ENCODE measurements at regions of chr6 and their contacts with region 1.

Region 1: GRCh38 chr6:84220809-84221409 is 6.5 kb downstream of the CEP162 start:
- DNase-seq: no peak
- ATAC-seq: no peak
- H3K4me3 ChIP-seq: no peak overlapping the region
- H3K27ac ChIP-seq: no peak overlapping the region
- H3K4me1 ChIP-seq: no peaks in the 10 kb centered on the region
- H3K27me3 ChIP-seq: no peaks in the 10 kb centered on the region
- CTCF ChIP-seq: peak; percentile 8 to 46 (median 38)
- POLR2A ChIP-seq: no peak

Region 2: DNA sequence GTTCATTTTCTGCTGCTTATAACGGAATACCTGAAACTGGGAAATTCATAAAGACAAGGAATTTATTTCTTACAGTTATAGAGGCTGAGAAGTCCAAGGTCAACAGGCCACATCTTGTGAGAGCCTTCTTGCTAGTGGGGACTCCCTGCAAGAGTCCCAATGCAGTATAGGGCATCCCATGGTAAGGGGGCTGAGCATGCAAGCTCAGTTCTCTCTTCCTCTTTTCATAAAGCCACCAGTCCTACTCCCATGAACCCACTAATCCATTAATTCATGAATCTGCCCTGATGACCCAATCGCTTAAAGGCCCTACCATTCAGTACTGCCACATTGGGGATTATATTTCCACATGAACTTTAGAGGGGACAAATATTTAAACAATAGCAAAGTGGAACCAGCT is 334.9 kb before region 1 on chr6:
- intact Hi-C with region 1: loop called (anchors 5 kb)
- DNase-seq: no peak
- ATAC-seq: no peak
- H3K4me3 ChIP-seq: no peak overlapping the region
- H3K27ac ChIP-seq: no peak overlapping the region
- H3K4me1 ChIP-seq: no peaks in the 10 kb centered on the region
- H3K27me3 ChIP-seq: no peaks in the 10 kb centered on the region
- CTCF ChIP-seq: no peak
- POLR2A ChIP-seq: no peak

Measured in body of pancreas (tissue), 4 donors.